Esophagus muscularis mucosa (tissue), 4 donors: ENCODE measurements at regions of chr3 and their contacts with region 1.

Region 1: GRCh38 chr3:148389916-148390315 is 307.8 kb upstream of the AGTR1 start:
- DNase-seq: no peak
- H3K4me3 ChIP-seq: no peak overlapping the region
- H3K27ac ChIP-seq: no peak overlapping the region
- H3K4me1 ChIP-seq: no peaks in the 10 kb centered on the region
- H3K27me3 ChIP-seq: no peaks in the 10 kb centered on the region
- CTCF ChIP-seq: no peak
- EP300 ChIP-seq: no peak
- POLR2A ChIP-seq: no peak

Region 2: DNA sequence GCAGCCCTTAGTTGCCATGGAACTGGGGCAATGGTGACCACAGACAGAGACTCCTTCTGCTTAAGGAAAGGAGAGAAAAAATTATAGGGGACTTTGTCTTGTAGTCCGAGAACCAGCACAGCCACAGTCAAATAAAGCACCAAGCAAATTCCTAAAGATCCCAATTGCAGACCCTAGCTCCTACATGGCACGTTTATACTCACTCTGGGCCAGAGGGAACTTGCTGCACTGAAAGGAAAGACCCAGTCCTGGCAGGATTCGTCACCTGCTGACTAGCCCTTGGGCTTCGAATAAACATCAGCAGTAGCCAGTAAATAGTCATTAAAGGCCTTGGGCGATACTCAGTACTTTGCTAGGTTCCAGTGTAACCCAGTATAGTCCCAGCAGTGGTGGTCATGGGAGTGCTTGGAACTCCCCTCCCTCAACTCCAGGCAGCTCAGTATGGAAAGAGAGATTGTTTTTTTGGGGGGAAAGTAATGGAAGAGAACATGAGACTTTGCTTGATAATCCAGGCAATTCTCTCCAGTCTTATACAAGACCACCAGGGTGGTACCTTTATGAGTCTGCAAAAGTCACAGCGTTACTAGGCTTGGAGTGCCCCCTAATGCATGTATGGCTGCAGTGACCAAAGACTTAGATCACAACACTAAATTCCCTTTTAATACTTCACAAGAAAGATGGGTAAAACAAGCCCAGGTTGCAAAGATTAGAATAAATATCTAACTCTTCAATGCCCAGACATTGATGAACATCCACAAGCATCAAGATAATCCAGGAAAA is 241.4 kb after region 1 on chr3:
- intact Hi-C with region 1: loop called (anchors 10 kb)
- DNase-seq: no peak
- H3K4me3 ChIP-seq: no peak overlapping the region
- H3K27ac ChIP-seq: no peak overlapping the region
- H3K4me1 ChIP-seq: no peaks in the 10 kb centered on the region
- H3K27me3 ChIP-seq: no peaks in the 10 kb centered on the region
- CTCF ChIP-seq: peak in 2 of 3 experiments; percentile 17 to 43
- EP300 ChIP-seq: no peak
- POLR2A ChIP-seq: no peak